HCT116 (cell line): ENCODE measurements at regions of chr12 and their contacts with region 1.

Region 1: DNA sequence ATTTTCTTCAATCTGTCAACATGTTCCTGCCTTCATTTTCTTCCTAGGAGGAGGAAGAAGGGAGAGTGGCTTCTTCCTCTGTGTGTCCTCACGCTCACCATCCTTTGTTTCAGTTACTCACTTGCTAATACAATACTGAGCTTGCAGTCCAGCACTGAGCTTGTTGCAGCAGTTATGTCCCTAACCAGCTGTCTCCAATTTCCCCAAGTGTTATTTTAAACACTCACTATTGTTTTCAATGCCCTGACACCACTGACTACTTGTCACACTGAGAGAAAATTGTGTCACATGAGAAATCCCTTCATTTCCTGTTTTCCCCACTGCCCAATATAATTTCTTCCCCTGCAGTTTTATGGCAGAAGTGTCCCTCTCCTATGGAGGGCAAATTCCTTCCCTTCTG is 53.4 kb downstream of the HSD17B6 start:
- DNase-seq: no peak
- ATAC-seq: no peak
- H3K4me3 ChIP-seq: no peak overlapping the region
- H3K27ac ChIP-seq: no peak overlapping the region
- H3K4me1 ChIP-seq: no peaks in the 10 kb centered on the region
- H3K27me3 ChIP-seq: no peaks in the 10 kb centered on the region
- CTCF ChIP-seq: no peak
- POLR2A ChIP-seq: no peak
- RAD21 ChIP-seq: no peak

Region 2: GRCh38 chr12:56469007-56469930 is 347.2 kb before region 1 on chr12:
- CTCF ChIA-PET with region 1: no interaction called
- POLR2A ChIA-PET with region 1: no interaction called
- RAD21 ChIA-PET with region 1: no interaction called
- intact Hi-C with region 1: no loop called
- DNase-seq: no peak
- ATAC-seq: peak; percentile 26
- H3K4me3 ChIP-seq: peak overlapping the region; percentile 74 to 99
- H3K27ac ChIP-seq: peak overlapping the region; percentile 68
- H3K4me1 ChIP-seq: peaks cover 0 to 18% of the 10 kb centered on the region in 2 experiments; a peak in 2 of 4 replicates
- H3K27me3 ChIP-seq: no peaks in the 10 kb centered on the region
- CTCF ChIP-seq: no peak
- POLR2A ChIP-seq: no peak
- RAD21 ChIP-seq: no peak

Region 3: GRCh38 chr12:56792678-56793077 is 23.8 kb before region 1 on chr12:
- CTCF ChIA-PET with region 1: no interaction called
- POLR2A ChIA-PET with region 1: no interaction called
- RAD21 ChIA-PET with region 1: no interaction called
- intact Hi-C with region 1: no loop called
- DNase-seq: no peak
- ATAC-seq: no peak
- H3K4me3 ChIP-seq: no peak overlapping the region
- H3K27ac ChIP-seq: no peak overlapping the region
- H3K4me1 ChIP-seq: no peaks in the 10 kb centered on the region
- H3K27me3 ChIP-seq: no peaks in the 10 kb centered on the region
- CTCF ChIP-seq: no peak
- POLR2A ChIP-seq: no peak
- RAD21 ChIP-seq: no peak

Region 4: DNA sequence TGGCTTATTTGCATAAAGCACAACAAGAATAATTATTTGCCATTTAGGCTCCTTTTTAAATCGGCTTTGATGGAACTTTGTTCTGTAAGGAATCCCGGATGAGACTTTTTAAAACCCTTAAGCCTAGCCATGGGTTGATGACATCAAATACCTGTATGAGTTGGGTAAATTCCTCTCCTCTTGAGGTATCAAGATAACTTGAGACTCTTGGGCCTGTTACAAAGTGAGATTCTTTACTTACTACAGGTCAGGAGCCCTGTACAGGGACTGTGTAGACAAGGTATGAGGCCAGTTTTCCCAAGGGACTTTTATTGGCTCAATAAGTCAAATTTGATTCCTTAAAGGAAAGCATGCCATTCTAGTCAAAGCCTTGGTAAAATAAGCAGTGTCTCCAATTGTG is 15.4 kb after region 1 on chr12:
- CTCF ChIA-PET with region 1: no interaction called
- POLR2A ChIA-PET with region 1: no interaction called
- RAD21 ChIA-PET with region 1: no interaction called
- intact Hi-C with region 1: loop called (anchors 1 kb)
- DNase-seq: no peak
- ATAC-seq: no peak
- H3K4me3 ChIP-seq: no peak overlapping the region
- H3K27ac ChIP-seq: no peak overlapping the region
- H3K4me1 ChIP-seq: peaks cover 0 to 4% of the 10 kb centered on the region in 2 experiments; a peak in 1 of 4 replicates
- H3K27me3 ChIP-seq: no peaks in the 10 kb centered on the region
- CTCF ChIP-seq: no peak
- POLR2A ChIP-seq: no peak
- RAD21 ChIP-seq: no peak

Region 5: DNA sequence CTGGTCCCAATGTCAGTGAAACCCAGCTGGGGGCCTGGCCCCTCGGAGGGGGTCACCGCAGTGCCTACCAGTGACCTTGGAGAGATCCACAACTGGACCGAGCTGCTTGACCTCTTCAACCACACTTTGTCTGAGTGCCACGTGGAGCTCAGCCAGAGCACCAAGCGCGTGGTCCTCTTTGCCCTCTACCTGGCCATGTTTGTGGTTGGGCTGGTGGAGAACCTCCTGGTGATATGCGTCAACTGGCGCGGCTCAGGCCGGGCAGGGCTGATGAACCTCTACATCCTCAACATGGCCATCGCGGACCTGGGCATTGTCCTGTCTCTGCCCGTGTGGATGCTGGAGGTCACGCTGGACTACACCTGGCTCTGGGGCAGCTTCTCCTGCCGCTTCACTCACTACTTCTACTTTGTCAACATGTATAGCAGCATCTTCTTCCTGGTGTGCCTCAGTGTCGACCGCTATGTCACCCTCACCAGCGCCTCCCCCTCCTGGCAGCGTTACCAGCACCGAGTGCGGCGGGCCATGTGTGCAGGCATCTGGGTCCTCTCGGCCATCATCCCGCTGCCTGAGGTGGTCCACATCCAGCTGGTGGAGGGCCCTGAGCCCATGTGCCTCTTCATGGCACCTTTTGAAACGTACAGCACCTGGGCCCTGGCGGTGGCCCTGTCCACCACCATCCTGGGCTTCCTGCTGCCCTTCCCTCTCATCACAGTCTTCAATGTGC is 178.9 kb after region 1 on chr12:
- CTCF ChIA-PET with region 1: no interaction called
- POLR2A ChIA-PET with region 1: no interaction called
- RAD21 ChIA-PET with region 1: no interaction called
- intact Hi-C with region 1: no loop called
- DNase-seq: no peak
- ATAC-seq: no peak
- H3K4me3 ChIP-seq: no peak overlapping the region
- H3K27ac ChIP-seq: no peak overlapping the region
- H3K4me1 ChIP-seq: 0 out of 4 replicates have a peak, but pooled peaks cover 3 to 4% of the 10 kb centered on the region in 2 experiments
- H3K27me3 ChIP-seq: no peaks in the 10 kb centered on the region
- CTCF ChIP-seq: no peak
- POLR2A ChIP-seq: no peak
- RAD21 ChIP-seq: no peak